Vagina (tissue), 2 donors: ENCODE measurements at regions of chr5 and their contacts with region 1.

Region 1: GRCh38 chr5:8997542-8998070 is 548.3 kb downstream of the SEMA5A start:
- DNase-seq: no peak
- H3K4me3 ChIP-seq: no peak overlapping the region
- H3K27ac ChIP-seq: no peak overlapping the region
- H3K4me1 ChIP-seq: no peaks in the 10 kb centered on the region
- H3K27me3 ChIP-seq: no peaks in the 10 kb centered on the region
- CTCF ChIP-seq: no peak
- POLR2A ChIP-seq: no peak

Region 2: GRCh38 chr5:9054821-9055589 is 57.4 kb after region 1 on chr5:
- intact Hi-C with region 1: no loop called
- DNase-seq: no peak
- H3K4me3 ChIP-seq: no peak overlapping the region
- H3K27ac ChIP-seq: no peak overlapping the region
- H3K4me1 ChIP-seq: peaks cover 11% of the 10 kb centered on the region
- H3K27me3 ChIP-seq: no peaks in the 10 kb centered on the region
- CTCF ChIP-seq: no peak
- POLR2A ChIP-seq: no peak

Region 3: GRCh38 chr5:10518347-10518746 is 1520.7 kb after region 1 on chr5:
- intact Hi-C with region 1: loop called (anchors 5 kb)
- DNase-seq: no peak
- H3K4me3 ChIP-seq: no peak overlapping the region
- H3K27ac ChIP-seq: no peak overlapping the region
- H3K4me1 ChIP-seq: no peaks in the 10 kb centered on the region
- H3K27me3 ChIP-seq: no peaks in the 10 kb centered on the region
- CTCF ChIP-seq: no peak
- POLR2A ChIP-seq: no peak